Dorsolateral prefrontal cortex (tissue), 120 donors: ENCODE measurements at regions of chr11 and their contacts with region 1.

Region 1: GRCh38 chr11:108697872-108698473 is 33.1 kb downstream of the DDX10 start:
- DNase-seq: peak in 8 of 10 donors; percentile 30 to 78 (median 48)
- H3K4me3 ChIP-seq: no peak overlapping the region
- H3K27ac ChIP-seq: no peak overlapping the region
- H3K27me3 ChIP-seq: no peaks in the 10 kb centered on the region
- CTCF ChIP-seq: peak; percentile 57 to 99 (median 85)

Region 2: GRCh38 chr11:109422870-109423465 is 725.0 kb after region 1 on chr11:
- intact Hi-C with region 1: loop called in 1 of 2 experiments (anchors 10 kb)
- DNase-seq: peak in 8 of 10 donors; percentile 22 to 54 (median 42)
- H3K4me3 ChIP-seq: peak overlapping the region; percentile 21 to 74 (median 60)
- H3K27ac ChIP-seq: peak overlapping the region in 57 of 59 donors; percentile 15 to 90 (median 80)
- H3K27me3 ChIP-seq: peaks cover 0 to 34% (median 8%) of the 10 kb centered on the region in 45 donors
- CTCF ChIP-seq: no peak

Region 3: DNA sequence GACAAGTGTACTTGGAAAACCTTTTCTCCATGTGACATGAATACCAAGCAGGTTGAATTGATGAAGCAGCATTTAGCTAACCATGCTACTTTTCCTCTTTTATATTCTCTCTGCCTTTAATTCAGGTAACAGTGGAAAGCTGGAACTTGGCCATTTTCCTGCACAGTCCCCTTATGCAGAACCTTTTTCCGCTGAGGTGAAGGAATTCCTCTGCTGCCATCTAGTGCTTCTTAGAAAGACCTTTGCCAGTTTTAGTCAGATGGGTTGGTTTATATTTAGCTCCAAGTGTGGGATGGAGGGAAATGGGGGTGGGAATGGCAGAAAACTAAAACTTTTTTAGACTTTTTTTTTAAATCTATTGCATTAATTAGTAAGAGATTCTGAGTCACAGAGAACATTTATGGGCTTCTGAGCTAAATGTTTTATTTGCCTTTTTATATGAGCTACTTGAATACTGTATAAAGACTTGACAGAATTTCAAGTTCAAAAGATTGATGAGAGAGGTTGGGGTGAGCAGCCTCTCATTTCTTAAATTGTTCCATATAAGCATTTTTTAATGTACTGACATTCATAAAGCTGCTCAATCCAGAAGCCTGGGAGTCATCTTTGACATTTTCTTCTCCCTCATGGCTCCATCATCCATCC is 1241.3 kb after region 1 on chr11:
- intact Hi-C with region 1: loop called (anchors 10 kb)
- DNase-seq: peak in 2 of 10 donors; percentile 16 to 24
- H3K4me3 ChIP-seq: no peak overlapping the region
- H3K27ac ChIP-seq: no peak overlapping the region
- H3K27me3 ChIP-seq: no peaks in the 10 kb centered on the region
- CTCF ChIP-seq: peak in 54 of 56 donors; percentile 27 to 73 (median 55)